ENCODE measurements at regions of chr7 and their contacts with region 1.

Region 1: GRCh38 chr7:65373608-65374351 is at the start of gene ZNF92:
- DNase-seq: peak; percentile 97 to 98
- ATAC-seq: peak; percentile 98
- H3K4me3 ChIP-seq: peak within 1 kb of the TSS; percentile 77 to 91
- H3K27ac ChIP-seq: peak within 1 kb of the TSS; percentile 47 to 95
- H3K4me1 ChIP-seq: peaks cover 0 to 2% of the 10 kb centered on the region in 2 donors
- H3K27me3 ChIP-seq: no peaks in the 10 kb centered on the region
- total RNA-seq, gene ZNF92: 8.0 to 9.1 TPM

Region 2: GRCh38 chr7:64533756-64534155 is 840.0 kb before region 1 on chr7:
- intact Hi-C with region 1: loop called in 1 of 2 experiments (anchors 10 kb)
- DNase-seq: no peak
- ATAC-seq: no peak
- H3K4me3 ChIP-seq: no peak overlapping the region
- H3K27ac ChIP-seq: no peak overlapping the region
- H3K4me1 ChIP-seq: no peaks in the 10 kb centered on the region
- H3K27me3 ChIP-seq: no peaks in the 10 kb centered on the region

Region 3: GRCh38 chr7:64774204-64774842 is 599.5 kb before region 1 on chr7:
- intact Hi-C with region 1: no loop called
- DNase-seq: no peak
- ATAC-seq: no peak
- H3K4me3 ChIP-seq: no peak overlapping the region
- H3K27ac ChIP-seq: no peak overlapping the region
- H3K4me1 ChIP-seq: no peaks in the 10 kb centered on the region
- H3K27me3 ChIP-seq: no peaks in the 10 kb centered on the region

Region 4: GRCh38 chr7:64794171-64794844 is 579.5 kb before region 1 on chr7 and contains the start of gene ZNF138:
- intact Hi-C with region 1: loop called in 1 of 2 experiments (anchors 5 kb)
- DNase-seq: peak; percentile 97 to 98
- ATAC-seq: peak; percentile 99
- H3K4me3 ChIP-seq: peak within 1 kb of the TSS; percentile 58 to 62
- H3K27ac ChIP-seq: peak within 1 kb of the TSS in 1 of 2 donors; percentile 43
- H3K4me1 ChIP-seq: no peaks in the 10 kb centered on the region
- H3K27me3 ChIP-seq: no peaks in the 10 kb centered on the region
- total RNA-seq, gene ZNF138: 6.1 to 9.2 TPM

Region 5: DNA sequence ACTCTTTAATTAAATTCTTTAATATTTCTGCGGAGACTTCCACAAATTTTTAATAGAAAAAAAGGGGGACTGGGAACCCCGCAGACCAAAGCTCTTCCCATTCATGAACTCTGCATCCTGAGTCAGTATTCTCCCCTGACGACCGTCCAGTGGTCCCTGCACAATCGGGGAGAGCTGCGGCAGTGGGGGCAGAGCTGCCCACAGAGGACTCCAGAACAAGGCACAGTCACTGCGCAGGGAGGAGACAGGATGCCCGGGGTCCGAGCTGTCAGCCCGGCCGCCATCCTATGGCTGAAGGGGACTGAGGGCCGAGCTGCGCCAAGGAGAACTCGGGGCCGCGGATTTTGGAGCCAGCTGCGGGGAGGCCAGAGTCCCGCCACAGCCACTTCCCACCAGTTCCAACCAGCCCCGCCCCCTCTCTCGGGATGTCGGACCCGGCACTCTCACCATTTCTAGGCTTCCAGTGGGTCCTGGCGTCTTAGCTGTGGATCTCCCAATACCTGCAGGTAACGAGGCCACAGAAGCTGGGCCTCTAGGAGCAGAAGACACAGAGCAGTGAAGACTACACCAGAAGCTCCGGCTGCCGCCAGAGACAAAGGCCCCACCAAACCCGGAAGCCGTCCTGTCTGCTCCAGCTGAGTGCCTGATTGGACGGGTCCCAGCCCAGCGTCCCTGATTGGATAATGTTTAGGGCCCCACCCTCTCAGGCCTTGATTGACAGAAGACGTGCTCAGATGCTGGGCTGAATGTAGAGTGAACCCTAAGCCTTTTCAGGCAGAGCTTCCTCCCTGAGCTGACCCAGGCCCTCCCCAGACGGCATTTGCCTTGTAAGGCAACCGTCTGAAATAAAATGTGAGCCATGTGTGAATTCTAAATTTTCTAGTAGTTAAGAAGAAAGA is 367.4 kb before region 1 on chr7 and contains the start of gene ERV3-1:
- intact Hi-C with region 1: loop called in 1 of 2 experiments (anchors 10 kb)
- DNase-seq: peak; percentile 97
- ATAC-seq: peak; percentile 99
- H3K4me3 ChIP-seq: peak within 1 kb of the TSS; percentile 7 to 90
- H3K27ac ChIP-seq: peak within 1 kb of the TSS in 1 of 2 donors; percentile 73
- H3K4me1 ChIP-seq: peaks cover 0 to 1% of the 10 kb centered on the region in 2 donors
- H3K27me3 ChIP-seq: no peaks in the 10 kb centered on the region
- total RNA-seq, gene ERV3-1: 22.0 to 31.3 TPM

Measured in aorta (tissue), 5 donors.